ENCODE measurements at regions of chr1 and their contacts with region 1.

Region 1: DNA sequence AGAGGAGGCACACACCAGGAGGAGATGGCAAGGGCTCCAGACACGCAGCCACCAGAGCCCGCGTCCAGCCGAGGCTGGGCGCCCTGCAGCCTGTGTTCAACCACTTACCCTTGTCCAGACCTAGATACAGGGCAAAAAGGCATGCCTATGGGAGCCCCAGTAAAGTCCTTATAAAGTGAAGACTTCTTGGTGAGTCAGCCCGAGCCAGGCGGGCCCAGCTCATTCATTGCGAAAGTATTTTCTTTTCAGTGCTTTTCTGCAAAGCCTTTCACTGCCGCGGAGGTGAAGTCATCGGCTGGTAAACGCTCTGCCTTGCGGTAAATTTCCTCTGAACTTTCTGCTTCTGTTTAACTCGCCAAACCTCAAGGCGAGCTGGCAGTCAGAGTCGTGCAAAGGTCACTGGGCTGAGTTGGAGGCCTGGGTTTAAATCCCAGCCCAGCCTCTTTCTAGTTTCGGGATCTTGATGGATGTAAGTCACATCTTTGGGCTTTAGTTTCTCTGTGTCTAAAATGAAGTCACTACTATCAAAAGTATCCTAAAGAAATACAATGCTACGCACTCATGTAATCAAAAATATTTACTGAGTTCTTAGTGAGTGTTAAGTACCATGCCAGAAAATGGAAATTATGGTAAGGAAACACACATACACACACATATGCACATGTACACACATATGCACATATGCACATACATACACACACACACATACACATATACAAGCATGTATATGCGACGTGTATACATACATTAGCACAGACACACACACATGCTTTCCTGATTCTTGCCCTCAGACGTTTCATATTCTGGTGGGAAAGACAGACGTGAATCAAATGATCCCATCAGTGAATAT is 54.7 kb upstream of the IFFO2 start:
- DNase-seq: peak; percentile 76
- H3K4me3 Mint-ChIP-seq: peak overlapping the region; percentile 9
- H3K27ac Mint-ChIP-seq: peak overlapping the region; percentile 89
- H3K4me1 Mint-ChIP-seq: peaks cover 42% of the 10 kb centered on the region
- H3K27me3 Mint-ChIP-seq: no peaks in the 10 kb centered on the region

Region 2: DNA sequence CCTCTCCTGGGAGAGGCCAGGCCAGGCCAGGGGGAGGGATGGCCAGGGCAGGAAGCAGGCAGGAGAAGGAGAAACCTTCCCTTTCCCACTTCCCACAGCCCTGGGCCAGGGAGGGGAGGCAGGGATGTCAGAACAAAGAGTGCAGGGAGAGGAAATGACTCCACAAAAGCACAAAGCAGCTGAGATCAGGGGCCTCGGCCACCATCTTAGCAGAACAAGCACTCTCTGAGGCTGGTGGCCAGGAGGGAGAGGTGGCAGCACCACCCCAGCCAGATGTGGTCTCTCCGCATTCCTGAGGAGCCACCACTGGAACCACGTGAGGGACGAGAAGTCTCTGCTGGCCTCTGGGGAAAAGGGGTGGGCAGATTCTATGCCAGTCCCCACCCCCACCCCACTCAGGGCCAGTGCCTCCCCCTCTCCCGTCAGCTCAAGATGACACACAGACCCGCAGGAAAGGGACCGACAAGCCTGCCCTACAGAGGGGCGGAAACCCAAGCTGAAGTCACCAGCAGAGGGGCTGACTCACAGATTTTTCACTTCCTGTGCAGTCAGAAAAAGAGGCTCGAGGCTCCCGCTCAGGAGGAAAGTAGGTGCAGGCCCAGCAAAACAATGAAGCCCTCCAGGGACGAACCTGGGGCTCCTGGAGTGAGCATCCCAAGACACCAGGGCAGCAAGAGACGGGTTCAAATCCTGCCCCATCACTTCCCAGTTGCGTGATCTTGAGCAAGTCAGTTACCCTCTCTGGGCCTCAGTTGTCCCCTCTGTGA is 84.7 kb before region 1 on chr1:
- intact Hi-C with region 1: loop called (anchors 1 kb)
- DNase-seq: peak; percentile 82
- H3K4me3 Mint-ChIP-seq: peak overlapping the region; percentile 83
- H3K27ac Mint-ChIP-seq: peak overlapping the region; percentile 96
- H3K4me1 Mint-ChIP-seq: peaks cover 62% of the 10 kb centered on the region
- H3K27me3 Mint-ChIP-seq: no peaks in the 10 kb centered on the region

Region 3: GRCh38 chr1:18997508-18997907 is 13.7 kb before region 1 on chr1:
- intact Hi-C with region 1: no loop called
- DNase-seq: no peak
- H3K4me3 Mint-ChIP-seq: no peak overlapping the region
- H3K27ac Mint-ChIP-seq: no peak overlapping the region
- H3K4me1 Mint-ChIP-seq: peaks cover 18% of the 10 kb centered on the region
- H3K27me3 Mint-ChIP-seq: no peaks in the 10 kb centered on the region

Region 4: DNA sequence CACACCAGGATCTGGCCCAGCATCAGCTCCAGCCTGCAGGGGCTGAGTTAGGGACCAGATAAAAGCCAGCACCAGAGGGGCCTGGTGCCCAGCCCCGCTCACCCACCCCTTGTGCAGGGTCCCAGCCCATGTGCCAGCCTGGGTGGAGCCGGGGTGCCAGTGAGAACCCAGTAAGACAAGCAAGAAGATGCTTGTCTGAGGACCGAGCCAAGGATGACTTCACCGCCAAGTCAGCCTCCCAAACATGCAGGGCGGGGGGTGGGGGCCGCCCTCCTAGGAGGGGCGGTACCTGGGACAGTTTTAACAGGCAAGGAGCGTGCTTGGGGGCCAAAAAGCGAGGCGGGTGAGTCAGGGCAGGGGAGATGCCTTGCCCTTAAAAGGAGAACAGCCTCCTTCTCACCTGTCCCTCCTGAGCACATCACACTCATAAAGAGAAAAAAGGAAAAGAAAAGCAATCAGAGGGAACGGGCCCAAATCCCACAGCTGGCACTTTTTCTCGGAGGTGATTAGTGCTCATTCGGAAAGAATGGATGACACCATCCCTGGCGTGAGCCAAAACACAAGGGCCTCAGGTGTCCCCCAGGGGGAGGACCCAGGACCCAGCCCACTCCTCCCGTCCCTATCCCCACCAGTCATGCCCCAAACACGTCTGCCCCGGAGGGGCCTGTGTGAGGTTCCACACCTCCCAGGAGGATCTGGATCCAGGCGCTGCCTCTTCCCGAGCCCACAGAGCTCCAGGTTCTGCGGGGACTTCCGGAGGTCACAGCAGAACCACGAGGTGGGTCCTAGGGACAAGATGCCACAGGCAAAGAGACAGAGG is 22.9 kb after region 1 on chr1:
- intact Hi-C with region 1: no loop called
- DNase-seq: no peak
- H3K4me3 Mint-ChIP-seq: no peak overlapping the region
- H3K27ac Mint-ChIP-seq: no peak overlapping the region
- H3K4me1 Mint-ChIP-seq: no peaks in the 10 kb centered on the region
- H3K27me3 Mint-ChIP-seq: peaks cover 15% of the 10 kb centered on the region

Region 5: DNA sequence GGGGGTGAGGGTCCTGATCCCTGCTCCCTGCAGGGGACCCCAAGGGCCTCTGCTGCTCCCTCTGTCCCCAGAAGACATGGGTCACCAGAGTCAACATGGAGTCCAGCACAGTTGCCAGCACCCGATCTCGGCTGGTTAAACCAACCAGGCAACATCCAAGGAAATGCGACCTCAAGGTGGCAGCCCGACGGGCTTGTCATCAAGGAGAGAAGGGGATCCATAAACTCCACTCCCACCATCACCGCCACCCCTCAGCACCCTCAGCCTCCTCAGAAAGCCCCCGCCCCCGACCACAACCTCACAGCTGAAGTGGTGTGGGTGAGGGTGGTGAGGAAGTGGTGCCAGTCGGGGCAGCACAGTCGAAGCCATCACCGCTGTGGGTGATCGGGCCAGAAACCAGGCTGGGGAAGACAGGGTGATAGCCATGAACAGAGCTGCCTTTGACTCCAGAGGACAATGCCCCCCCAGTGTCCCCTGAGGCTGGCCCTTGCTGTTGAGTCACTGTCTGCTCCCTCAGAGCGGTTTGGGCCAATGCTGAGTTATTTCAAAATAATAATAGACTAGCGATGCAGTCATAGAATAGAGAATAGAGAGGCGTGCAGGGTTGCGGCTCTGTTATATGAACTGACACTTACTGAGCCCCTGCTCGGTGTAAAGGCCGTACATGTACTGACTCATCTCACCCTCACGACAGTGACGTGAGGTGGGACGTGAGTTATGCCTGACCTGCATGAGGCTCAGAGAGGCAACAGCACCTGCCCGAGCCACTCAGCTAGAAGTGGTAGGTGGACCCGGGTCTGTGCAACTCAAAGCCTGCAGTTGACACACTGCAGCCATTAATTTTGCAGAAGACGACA is 34.0 kb after region 1 on chr1:
- intact Hi-C with region 1: no loop called
- DNase-seq: no peak
- H3K4me3 Mint-ChIP-seq: no peak overlapping the region
- H3K27ac Mint-ChIP-seq: no peak overlapping the region
- H3K4me1 Mint-ChIP-seq: peaks cover 2% of the 10 kb centered on the region
- H3K27me3 Mint-ChIP-seq: peaks cover 9% of the 10 kb centered on the region

Region 6: DNA sequence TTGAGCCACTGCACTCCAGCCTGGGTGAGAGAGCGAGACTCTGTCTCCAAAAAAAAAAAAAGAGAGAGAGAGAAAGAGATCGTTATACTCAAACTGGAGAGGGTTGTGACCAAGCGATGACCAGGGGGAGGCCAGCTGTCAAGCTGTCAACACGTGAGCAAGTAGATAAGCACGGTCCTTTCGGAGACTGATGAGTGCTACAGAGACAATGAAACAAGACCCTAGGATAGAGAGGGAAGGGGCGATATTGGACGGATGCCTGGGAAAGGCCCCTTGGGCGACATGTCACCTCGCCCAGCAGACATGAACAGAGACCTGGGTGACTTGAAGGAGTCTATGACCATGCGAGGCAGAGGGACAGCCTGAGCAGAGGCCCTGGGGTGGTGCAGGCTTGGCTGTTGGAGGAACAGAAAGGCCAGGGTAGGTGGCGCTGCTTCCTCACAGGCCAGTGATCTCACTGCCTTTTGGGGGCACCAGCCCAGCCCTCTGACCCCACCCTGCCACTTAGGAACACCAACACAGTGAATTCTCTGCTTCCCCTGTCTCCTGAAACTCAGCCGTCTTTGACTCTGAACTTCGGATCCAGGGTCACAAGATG is 46.1 kb after region 1 on chr1:
- intact Hi-C with region 1: loop called (anchors 5 kb)
- DNase-seq: no peak
- H3K4me3 Mint-ChIP-seq: no peak overlapping the region
- H3K27ac Mint-ChIP-seq: peak overlapping the region; percentile 11
- H3K4me1 Mint-ChIP-seq: peaks cover 9% of the 10 kb centered on the region
- H3K27me3 Mint-ChIP-seq: peaks cover 29% of the 10 kb centered on the region

Measured in activated T-helper 2 cell treated with anti-CD3 and anti-CD28 coated beads, Interferon-gamma antibody, Interleukin-2, Interleukin-4, amounts not matched to agents 10 μg/mL and 5 μg/mL and 100 μg/mL, durations not matched to agents 14 hours and 24 hours and 36 hours (primary cell).